ENCODE measurements at regions of chr7 and their contacts with region 1.

Region 1: DNA sequence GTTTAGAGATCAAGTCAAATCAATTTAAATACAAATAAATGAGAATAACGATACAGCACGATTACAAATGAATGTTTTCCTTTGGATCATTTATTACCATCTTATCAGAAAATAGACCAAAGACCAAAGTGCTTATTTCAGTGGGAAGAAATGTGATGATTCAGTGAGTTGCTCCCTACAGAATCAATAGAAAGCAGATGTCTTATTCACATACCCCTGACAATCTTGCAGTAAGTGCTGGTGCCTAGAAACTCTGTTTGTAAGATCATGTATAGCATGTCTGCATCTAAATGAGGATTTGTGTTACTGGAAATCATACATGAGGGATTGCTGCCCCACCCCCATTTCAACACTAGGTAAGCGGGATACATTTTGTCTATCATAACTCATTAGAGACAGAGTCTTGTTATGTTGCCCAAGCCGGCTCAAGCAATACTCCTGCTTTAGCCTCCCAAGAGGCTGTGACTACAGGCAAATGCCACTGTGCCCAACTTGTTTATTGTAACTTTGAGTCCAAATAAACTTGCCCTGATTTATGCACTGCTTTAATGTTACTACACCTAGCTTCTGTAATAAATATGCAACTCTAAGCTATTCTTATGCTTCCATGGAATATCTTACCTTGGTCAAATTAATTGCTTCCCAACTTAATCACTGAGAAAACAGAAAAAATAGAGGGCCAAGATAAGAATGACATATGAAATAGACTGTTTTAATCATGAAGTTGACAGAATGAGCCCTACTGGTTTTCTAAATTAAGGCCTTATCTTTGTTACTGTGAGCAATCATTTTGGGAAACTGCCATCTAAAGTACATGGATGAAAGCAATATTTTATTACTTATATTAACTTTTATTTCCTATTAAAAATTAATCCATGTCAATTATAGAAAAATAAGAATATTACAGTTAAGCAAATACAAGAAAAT is 82.5 kb downstream of the AHR start:
- DNase-seq: no peak
- H3K4me3 Mint-ChIP-seq: peak overlapping the region; percentile 1
- H3K27ac Mint-ChIP-seq: peak overlapping the region; percentile 9
- H3K4me1 Mint-ChIP-seq: peaks cover 61% of the 10 kb centered on the region
- H3K27me3 Mint-ChIP-seq: no peaks in the 10 kb centered on the region
- CTCF ChIP-seq: no peak

Region 2: DNA sequence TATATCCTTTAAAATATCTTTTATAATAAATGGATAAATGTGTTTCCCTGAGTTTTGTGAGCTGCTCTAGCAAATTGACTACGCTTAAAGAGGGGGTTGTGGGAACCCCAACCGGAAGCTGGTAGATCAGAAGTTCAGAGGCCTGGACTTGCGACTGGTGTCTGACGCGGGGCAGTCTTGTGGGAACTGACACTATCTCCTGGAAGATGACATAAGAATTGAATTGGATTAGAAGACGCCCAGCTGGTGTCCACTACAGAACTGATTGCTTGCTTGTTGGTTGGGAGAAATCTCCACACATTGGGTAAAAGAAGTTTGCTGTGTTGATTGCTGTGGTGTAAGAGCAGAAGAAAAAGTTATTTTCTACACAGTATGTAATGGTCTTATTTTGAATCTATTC is 133.6 kb before region 1 on chr7:
- CTCF ChIA-PET with region 1: interaction called, 13 read pairs
- intact Hi-C with region 1: no loop called
- DNase-seq: no peak
- H3K4me3 Mint-ChIP-seq: no peak overlapping the region
- H3K27ac Mint-ChIP-seq: peak overlapping the region; percentile 48
- H3K4me1 Mint-ChIP-seq: peaks cover 44% of the 10 kb centered on the region
- H3K27me3 Mint-ChIP-seq: no peaks in the 10 kb centered on the region
- CTCF ChIP-seq: no peak

Measured in Calu3 (cell line).